ENCODE measurements at regions of chr16 and their contacts with region 1.

Region 1: DNA sequence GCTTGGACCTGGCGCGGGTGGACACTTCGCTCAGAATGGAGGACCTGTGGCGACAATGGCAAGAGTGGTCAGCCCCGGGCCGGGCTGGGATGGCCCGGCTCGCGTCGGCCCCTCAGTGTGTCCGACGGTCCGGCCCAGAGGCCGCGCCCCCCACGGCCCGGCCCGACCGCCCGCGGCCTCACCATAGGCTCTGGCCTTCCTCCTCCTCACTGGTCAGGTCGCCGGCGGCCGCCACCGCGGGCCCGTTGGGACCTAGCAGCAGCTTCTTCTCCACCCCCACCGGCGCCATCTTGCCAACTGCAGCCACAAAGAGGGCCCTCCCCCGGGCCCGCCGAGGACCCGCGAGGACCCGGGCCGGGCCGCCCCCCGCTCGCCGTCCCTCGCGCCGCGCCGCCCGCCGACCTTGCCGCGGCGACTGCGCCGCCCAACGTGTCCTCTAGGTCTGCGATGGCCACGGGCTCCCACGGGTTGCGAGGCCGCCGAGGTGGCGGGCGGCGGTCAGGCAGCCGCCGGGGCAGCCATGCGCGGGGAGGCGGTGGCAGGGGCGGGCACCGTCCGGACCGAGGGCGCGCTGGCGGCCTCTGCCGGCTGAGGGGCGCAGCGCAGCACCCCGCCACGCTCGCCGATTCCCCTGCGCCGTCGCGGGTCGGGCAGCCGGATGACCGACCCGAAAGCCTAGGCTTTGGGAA is at the start of gene DYNC1LI2:
- DNase-seq: peak; percentile 73 to 80
- ATAC-seq: peak; percentile 91 to 95
- H3K4me3 ChIP-seq: peak within 1 kb of the TSS; percentile 92
- H3K27ac ChIP-seq: peak within 1 kb of the TSS; percentile 92 to 96
- H3K4me1 ChIP-seq: peaks cover 16% of the 10 kb centered on the region
- CTCF ChIP-seq: peak; percentile 91
- EP300 ChIP-seq: no peak
- POLR2A ChIP-seq: peak; percentile 55
- RAD21 ChIP-seq: peak; percentile 9 to 59; a peak in 4 of 5 replicates
- polyA plus RNA-seq, gene DYNC1LI2: 112 and 128 TPM in 2 replicates

Region 2: DNA sequence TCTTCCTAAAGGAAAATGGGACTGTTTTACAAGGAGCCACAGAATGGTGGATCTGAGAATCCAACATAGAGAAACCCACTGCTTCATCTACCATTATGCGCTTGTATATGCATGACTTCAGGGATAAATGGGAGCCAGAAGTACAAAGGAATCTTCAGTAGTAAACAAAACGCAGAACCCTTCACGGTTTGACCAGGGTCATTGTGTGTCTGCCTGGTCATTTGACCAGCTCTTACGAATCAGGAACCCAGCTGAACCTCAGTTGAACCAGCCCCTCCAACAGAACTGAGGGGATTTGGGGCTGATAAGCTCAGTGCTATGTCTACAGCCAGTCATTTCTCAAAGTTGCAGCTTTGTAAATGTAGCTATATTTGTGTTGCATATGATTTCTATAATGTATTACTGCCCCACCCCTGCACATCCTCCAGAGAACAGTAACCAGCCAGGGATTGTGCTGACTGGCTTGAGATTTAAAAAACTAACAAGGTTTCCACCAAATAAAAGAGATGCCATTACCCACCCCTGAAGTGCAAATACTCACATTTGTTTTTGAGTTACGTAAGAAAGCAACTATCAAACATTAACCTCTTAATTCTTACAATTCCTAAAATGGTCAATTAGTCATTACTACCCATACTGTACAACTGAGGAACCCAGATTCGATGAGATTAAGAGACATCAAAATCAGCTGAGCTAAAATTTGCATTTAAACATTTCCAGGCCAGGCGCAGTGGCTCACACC is 61.2 kb before region 1 on chr16:
- CTCF ChIA-PET with region 1: interaction called, 10 read pairs
- POLR2A ChIA-PET with region 1: no interaction called
- DNase-seq: no peak
- ATAC-seq: peak in 1 of 2 experiments; percentile 46; a peak in 2 of 6 replicates
- H3K4me3 ChIP-seq: no peak overlapping the region
- H3K27ac ChIP-seq: peak overlapping the region in 1 of 2 experiments; percentile 14; a peak in 1 of 6 replicates
- H3K4me1 ChIP-seq: peaks cover 41% of the 10 kb centered on the region
- CTCF ChIP-seq: no peak
- EP300 ChIP-seq: no peak
- POLR2A ChIP-seq: no peak
- RAD21 ChIP-seq: no peak

Region 3: DNA sequence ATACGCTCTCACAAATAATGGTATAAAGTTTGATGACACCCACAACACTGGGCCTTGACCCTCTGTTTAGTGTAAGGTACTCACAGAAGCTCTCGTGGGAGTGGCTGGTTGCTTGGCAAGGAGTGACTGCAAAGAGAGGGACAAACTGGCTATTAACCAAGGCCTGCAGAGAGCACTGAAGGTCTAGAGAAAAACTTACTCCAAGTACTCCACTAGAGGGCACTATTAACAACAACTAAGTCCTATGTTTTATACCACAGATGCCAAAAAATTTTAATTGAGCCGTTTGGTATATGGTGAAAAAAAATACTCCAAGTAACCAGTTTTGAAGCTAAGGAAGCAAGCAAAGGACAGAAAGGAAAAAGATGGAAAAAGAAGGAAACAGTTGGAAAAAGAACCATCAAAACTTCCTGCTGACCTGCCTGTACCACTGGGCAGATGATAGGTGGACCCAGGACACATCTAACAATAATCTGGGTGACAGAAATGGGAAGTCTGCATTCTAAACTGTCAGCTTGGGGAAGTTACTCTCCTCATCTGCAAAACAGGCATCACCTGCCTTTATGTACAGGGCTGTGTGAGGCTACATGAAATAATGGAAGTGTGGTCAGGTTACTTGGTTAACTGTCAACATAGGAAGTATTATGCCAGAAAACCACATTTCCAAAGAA is 23.2 kb before region 1 on chr16:
- CTCF ChIA-PET with region 1: interaction called, 166 read pairs
- POLR2A ChIA-PET with region 1: interaction called, 3 read pairs
- DNase-seq: peak; percentile 61 to 66
- ATAC-seq: peak; percentile 90 to 94
- H3K4me3 ChIP-seq: no peak overlapping the region
- H3K27ac ChIP-seq: no peak overlapping the region
- H3K4me1 ChIP-seq: no peaks in the 10 kb centered on the region
- CTCF ChIP-seq: peak; percentile 80
- EP300 ChIP-seq: no peak
- POLR2A ChIP-seq: no peak
- RAD21 ChIP-seq: peak; percentile 37 to 52; a peak in 3 of 5 replicates

Region 4: DNA sequence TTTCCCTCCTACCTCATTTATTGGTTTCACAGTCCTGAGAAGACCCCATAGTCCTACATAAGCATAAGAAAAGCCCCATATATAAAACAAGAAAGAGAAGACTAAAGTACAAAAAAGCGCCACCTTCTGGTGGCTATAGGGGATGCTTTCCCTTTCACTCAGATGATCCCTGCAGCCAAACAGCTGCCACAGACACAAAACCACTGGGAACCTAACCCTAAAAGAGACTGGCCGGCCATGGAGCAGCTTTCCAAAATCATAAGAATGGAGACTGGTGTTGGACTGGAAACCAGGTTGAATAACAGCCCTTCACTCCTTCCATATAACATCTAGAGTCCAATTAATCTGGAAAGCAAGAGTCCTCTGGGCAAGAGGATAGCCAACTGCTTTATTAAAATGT is 11.4 kb before region 1 on chr16:
- CTCF ChIA-PET with region 1: interaction called, 48 read pairs
- POLR2A ChIA-PET with region 1: interaction called, 5 read pairs
- DNase-seq: peak; percentile 51 to 80
- ATAC-seq: peak; percentile 67 to 78; a peak in 4 of 6 replicates
- H3K4me3 ChIP-seq: no peak overlapping the region
- H3K27ac ChIP-seq: peak overlapping the region; percentile 83 to 88
- H3K4me1 ChIP-seq: peaks cover 43% of the 10 kb centered on the region
- CTCF ChIP-seq: peak; percentile 63
- EP300 ChIP-seq: no peak
- POLR2A ChIP-seq: no peak
- RAD21 ChIP-seq: peak in 1 of 2 experiments; percentile 18; a peak in 2 of 5 replicates

Region 5: DNA sequence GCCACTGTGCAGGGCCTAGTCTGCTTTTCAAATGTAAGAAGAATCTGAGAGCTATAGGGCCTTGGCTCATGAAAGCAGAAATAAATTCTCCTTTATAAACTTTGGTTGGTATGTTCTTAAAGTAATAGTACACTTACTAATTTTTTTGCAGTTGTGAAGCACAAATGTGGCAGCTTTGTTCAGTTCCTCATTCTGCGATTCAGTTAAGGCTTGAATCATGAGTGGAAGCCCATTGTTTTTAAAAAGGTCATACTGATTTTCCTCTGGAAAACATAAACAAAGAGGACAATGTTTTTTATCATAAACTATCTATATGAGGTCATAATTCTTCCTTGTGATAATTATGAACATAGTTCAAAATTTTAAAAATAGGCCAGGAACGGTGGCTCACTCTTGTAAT is 23.5 kb after region 1 on chr16:
- CTCF ChIA-PET with region 1: interaction called, 29 read pairs
- POLR2A ChIA-PET with region 1: no interaction called
- DNase-seq: no peak
- ATAC-seq: no peak
- H3K4me3 ChIP-seq: no peak overlapping the region
- H3K27ac ChIP-seq: no peak overlapping the region
- H3K4me1 ChIP-seq: no peaks in the 10 kb centered on the region
- CTCF ChIP-seq: no peak
- EP300 ChIP-seq: no peak
- POLR2A ChIP-seq: no peak
- RAD21 ChIP-seq: no peak

Region 6: GRCh38 chr16:67055712-67056487 is 304.5 kb after region 1 on chr16:
- CTCF ChIA-PET with region 1: no interaction called
- POLR2A ChIA-PET with region 1: no interaction called
- DNase-seq: peak; percentile 36
- ATAC-seq: peak; percentile 84 to 85
- H3K4me3 ChIP-seq: no peak overlapping the region
- H3K27ac ChIP-seq: no peak overlapping the region
- H3K4me1 ChIP-seq: peaks cover 9% of the 10 kb centered on the region; the same call in 2 of the 3 replicates
- CTCF ChIP-seq: no peak
- EP300 ChIP-seq: no peak
- POLR2A ChIP-seq: no peak
- RAD21 ChIP-seq: no peak

Region 7: DNA sequence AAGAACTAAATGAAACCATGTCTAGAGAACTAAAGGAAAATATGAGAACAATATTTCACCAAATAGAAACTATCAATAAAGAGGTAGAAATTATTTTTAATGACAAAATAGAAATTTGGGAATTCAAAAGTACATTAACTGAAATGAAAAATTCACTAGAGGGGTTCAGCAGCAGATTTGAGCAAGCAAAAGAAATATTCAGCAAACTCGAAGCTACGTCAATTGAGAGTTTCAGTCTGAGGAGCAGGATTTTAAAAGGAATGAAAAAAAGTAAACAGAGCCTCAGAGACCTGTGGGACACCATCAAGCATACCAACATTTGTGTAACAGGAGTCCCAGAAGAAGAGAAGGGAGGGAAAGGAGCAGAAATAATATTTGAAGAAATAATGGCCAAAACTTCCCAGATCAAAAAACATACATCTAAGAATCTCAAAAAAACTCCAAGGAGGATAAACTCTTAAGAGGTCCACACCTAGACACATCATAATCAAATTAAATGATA is 1826.0 kb after region 1 on chr16:
- CTCF ChIA-PET with region 1: no interaction called
- POLR2A ChIA-PET with region 1: no interaction called
- DNase-seq: no peak
- ATAC-seq: no peak
- H3K4me3 ChIP-seq: no peak overlapping the region
- H3K27ac ChIP-seq: no peak overlapping the region
- H3K4me1 ChIP-seq: no peaks in the 10 kb centered on the region
- CTCF ChIP-seq: no peak
- EP300 ChIP-seq: no peak
- POLR2A ChIP-seq: no peak
- RAD21 ChIP-seq: no peak